Kidney (tissue), 22 donors: ENCODE measurements at regions of chr11 and their contacts with region 1.

Region 1: DNA sequence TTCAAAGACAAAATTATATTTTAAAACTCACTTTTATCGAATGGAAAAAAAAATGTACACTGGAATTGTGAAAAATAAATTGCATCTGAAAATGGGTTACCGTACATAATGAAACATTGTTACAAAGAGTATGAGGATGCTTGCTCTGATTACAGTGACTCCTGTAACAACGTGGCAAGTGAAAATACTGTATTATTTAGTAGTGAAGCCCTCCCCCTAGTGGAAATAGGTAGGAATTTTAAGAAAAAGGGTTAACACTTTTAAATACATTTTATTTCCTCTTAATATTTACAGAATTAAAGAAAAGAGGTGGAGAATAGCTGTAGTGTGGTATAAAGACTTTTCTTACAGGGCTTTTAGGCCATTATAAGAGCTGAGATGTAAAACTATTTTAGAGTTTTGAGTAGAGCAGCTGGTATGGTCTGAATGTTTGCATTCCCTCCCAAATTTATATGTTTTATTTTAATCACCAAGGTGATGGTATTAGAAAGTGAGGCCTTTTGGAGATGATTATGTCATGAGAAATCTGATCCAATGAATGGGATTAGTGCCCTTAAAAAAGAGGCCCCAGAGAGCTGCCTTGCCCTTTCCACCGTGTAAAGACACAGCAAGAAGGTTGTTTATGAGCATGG is 25.2 kb downstream of the FAM76B start:
- DNase-seq: peak in 2 of 5 donors; percentile 75 to 84
- H3K4me3 ChIP-seq: no peak overlapping the region
- H3K27ac ChIP-seq: no peak overlapping the region
- H3K4me1 ChIP-seq: no peaks in the 10 kb centered on the region
- H3K27me3 ChIP-seq: no peaks in the 10 kb centered on the region
- CTCF ChIP-seq: peak; percentile 50

Region 2: GRCh38 chr11:95150946-95151684 is 613.3 kb before region 1 on chr11:
- intact Hi-C with region 1: loop called (anchors 5 kb)
- DNase-seq: peak; percentile 95 to 97 (median 96)
- H3K4me3 ChIP-seq: peak overlapping the region; percentile 69 to 85 (median 70)
- H3K27ac ChIP-seq: peak overlapping the region; percentile 91 to 92
- H3K4me1 ChIP-seq: peaks cover 0 to 9% (median 0%) of the 10 kb centered on the region in 3 donors
- H3K27me3 ChIP-seq: no peaks in the 10 kb centered on the region
- CTCF ChIP-seq: peak; percentile 89

Region 3: GRCh38 chr11:95584589-95584988 is 179.8 kb before region 1 on chr11:
- intact Hi-C with region 1: no loop called
- DNase-seq: no peak
- H3K4me3 ChIP-seq: no peak overlapping the region
- H3K27ac ChIP-seq: no peak overlapping the region
- H3K4me1 ChIP-seq: no peaks in the 10 kb centered on the region
- H3K27me3 ChIP-seq: no peaks in the 10 kb centered on the region
- CTCF ChIP-seq: no peak

Region 4: DNA sequence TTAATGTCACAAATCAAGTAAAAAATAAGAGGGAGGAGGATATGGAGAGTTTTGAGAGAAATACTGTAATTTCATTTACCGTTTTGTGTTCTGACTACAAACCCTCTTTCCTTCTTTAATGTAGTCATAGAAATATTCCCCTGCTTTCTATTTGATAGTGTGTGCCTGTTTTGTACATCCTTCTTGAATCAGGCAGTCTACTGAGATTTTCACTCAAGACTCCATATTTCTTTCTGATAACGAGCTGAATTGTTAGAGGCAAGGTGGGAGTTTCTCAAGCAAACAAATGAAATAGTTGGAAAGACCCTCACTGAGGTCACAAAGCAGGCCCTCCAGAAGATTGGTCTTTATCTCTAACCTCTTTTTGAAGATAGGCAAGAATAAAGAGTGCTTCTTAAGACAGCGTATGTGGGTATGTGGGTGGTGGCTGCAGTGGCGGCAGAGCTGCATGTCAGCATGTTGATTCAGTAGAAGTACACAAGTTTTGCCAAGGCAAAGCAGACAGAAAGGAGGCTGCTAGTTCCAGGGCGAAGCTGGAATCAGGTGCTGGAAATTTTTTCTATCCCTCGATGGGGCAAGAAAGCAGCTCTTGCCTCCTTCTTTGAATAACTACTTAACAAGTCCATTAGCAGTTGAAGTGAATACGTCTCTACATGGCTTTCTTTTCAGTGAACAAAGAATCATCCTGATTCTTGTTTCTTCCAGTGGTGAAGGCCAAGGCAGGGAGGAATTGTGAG is 139.1 kb before region 1 on chr11:
- intact Hi-C with region 1: no loop called
- DNase-seq: no peak
- H3K4me3 ChIP-seq: no peak overlapping the region
- H3K27ac ChIP-seq: no peak overlapping the region
- H3K4me1 ChIP-seq: no peaks in the 10 kb centered on the region
- H3K27me3 ChIP-seq: no peaks in the 10 kb centered on the region
- CTCF ChIP-seq: no peak

Region 5: GRCh38 chr11:95699631-95700470 is 64.5 kb before region 1 on chr11:
- intact Hi-C with region 1: no loop called
- DNase-seq: no peak
- H3K4me3 ChIP-seq: no peak overlapping the region
- H3K27ac ChIP-seq: no peak overlapping the region
- H3K4me1 ChIP-seq: no peaks in the 10 kb centered on the region
- H3K27me3 ChIP-seq: no peaks in the 10 kb centered on the region
- CTCF ChIP-seq: no peak